ENCODE measurements at regions of chr20 and their contacts with region 1.

Region 1: DNA sequence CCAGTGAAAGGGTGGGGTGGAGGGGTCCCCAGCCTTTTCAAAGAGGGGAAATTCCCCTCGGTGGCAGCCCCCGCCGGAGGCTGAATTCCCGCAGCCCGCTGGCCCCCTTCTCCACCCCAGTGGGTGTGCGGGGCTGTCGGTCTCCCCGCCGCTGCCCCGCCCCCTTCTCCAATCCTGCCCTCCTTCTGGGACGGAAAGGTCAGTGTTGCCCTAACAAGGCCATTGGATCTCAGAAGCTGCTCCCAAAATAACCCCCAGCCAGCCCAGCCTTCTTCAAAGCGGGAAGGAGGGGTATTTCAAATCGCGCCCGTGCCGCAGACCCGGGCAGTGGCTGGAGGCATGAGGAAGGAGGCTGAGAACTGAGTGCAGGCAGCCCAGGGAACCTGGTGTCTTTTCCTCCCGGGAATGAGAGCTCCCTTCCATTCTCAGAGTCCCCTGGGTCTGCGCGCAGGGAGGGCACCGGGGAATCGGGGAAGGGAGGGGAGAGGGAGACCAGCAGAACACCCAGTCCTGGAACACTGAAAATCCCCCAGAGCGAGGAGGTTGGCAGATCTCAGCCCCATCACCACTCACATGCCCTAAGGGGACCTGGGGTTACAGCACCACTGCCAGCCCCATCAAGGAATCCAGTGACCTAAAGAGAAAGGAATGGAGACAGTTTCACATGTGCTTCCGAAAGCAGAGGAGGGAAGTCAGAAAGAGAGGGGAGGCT is at the start of gene JPH2:
- DNase-seq: no peak
- H3K4me3 Mint-ChIP-seq: peak within 1 kb of the TSS; percentile 7
- H3K27ac Mint-ChIP-seq: no peak within 1 kb of the TSS
- H3K4me1 Mint-ChIP-seq: peaks cover 8% of the 10 kb centered on the region
- H3K27me3 Mint-ChIP-seq: peaks cover 41% of the 10 kb centered on the region
- total RNA-seq, gene JPH2: not detected

Region 2: GRCh38 chr20:43448748-43449535 is 738.3 kb before region 1 on chr20:
- CTCF ChIA-PET with region 1: interaction called, 9 read pairs
- intact Hi-C with region 1: loop called (anchors 1 kb)
- DNase-seq: peak; percentile 66
- H3K4me3 Mint-ChIP-seq: no peak overlapping the region
- H3K27ac Mint-ChIP-seq: no peak overlapping the region
- H3K4me1 Mint-ChIP-seq: no peaks in the 10 kb centered on the region
- H3K27me3 Mint-ChIP-seq: peaks cover 17% of the 10 kb centered on the region

Region 3: DNA sequence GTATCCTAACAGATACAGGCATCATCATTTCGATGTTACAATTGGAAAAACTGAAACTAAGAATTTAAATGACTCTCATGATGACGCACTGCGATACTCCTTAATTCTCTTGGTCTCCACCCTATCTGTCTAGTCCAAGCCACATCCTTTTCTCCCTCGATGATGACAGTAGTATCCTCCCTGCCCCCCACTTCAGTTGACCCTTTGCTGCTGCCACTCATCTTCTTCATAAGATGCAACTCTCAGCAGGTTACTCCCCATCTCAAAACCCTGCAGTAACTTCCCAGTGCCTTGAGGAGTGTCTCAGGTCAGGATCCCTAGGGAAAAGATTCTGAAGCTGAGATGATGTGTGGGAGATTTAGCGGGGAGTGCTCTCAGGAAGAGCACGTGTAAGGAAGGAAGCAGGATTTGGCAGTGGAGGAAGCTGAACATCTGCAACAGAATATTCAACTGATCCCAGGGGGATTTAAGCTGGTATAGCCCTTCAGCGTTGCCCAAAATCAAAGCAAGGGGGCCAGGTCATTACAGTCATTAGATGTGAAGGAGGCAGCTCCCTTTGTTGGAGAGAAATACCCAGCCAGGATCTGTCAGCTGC is 16.3 kb before region 1 on chr20:
- CTCF ChIA-PET with region 1: interaction called, 15 read pairs
- intact Hi-C with region 1: no loop called
- DNase-seq: no peak
- H3K4me3 Mint-ChIP-seq: no peak overlapping the region
- H3K27ac Mint-ChIP-seq: no peak overlapping the region
- H3K4me1 Mint-ChIP-seq: no peaks in the 10 kb centered on the region
- H3K27me3 Mint-ChIP-seq: peaks cover 12% of the 10 kb centered on the region